ENCODE measurements at regions of chr6 and their contacts with region 1.

Region 1: GRCh38 chr6:87929843-87930288 is 117.8 kb upstream of the SPACA1 start:
- H3K4me3 Mint-ChIP-seq: no peak overlapping the region
- H3K27ac Mint-ChIP-seq: no peak overlapping the region
- H3K4me1 Mint-ChIP-seq: no peaks in the 10 kb centered on the region
- H3K27me3 Mint-ChIP-seq: no peaks in the 10 kb centered on the region

Region 2: DNA sequence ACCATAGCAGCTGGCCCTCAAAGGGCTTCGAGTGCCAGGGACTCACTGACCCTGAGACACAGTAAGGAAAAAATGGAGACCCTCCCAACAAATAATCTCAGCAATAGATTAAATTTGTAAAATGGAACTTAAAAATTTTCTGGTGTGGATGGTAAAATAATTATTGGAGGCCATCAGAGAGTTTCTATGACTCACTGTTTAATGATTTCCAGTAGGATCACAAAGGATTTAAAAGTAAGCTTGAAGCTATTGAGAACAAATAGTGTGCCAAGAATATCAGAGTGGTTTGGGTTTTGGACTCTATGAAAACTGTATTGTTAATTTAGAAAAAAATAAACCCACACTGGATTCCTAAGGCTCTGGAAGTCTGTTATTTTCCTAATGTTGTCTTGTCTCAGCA is 112.7 kb before region 1 on chr6:
- intact Hi-C with region 1: no loop called
- H3K4me3 Mint-ChIP-seq: no peak overlapping the region
- H3K27ac Mint-ChIP-seq: no peak overlapping the region
- H3K4me1 Mint-ChIP-seq: no peaks in the 10 kb centered on the region
- H3K27me3 Mint-ChIP-seq: no peaks in the 10 kb centered on the region

Region 3: DNA sequence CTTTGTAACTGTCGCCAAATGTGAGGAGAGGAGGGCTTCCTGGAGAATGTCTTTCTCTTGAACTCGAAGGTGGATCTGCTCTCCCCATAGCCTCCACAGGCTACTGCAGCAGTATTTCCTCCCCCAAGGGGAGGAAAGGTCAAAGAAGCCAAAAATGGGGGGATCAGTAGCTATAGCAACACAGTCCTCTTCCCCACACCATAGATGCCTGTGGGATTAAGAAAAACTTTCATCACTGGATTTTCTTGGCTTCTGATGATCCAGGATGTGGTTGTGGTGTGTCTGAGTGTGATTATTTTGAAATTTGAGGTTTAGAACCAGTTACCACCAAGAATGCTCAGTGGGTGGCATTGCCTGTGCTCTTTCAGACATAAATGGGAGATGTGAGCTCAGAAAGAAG is 22.3 kb before region 1 on chr6:
- intact Hi-C with region 1: no loop called
- H3K4me3 Mint-ChIP-seq: no peak overlapping the region
- H3K27ac Mint-ChIP-seq: no peak overlapping the region
- H3K4me1 Mint-ChIP-seq: peaks cover 7% of the 10 kb centered on the region
- H3K27me3 Mint-ChIP-seq: peaks cover 21% of the 10 kb centered on the region

Region 4: DNA sequence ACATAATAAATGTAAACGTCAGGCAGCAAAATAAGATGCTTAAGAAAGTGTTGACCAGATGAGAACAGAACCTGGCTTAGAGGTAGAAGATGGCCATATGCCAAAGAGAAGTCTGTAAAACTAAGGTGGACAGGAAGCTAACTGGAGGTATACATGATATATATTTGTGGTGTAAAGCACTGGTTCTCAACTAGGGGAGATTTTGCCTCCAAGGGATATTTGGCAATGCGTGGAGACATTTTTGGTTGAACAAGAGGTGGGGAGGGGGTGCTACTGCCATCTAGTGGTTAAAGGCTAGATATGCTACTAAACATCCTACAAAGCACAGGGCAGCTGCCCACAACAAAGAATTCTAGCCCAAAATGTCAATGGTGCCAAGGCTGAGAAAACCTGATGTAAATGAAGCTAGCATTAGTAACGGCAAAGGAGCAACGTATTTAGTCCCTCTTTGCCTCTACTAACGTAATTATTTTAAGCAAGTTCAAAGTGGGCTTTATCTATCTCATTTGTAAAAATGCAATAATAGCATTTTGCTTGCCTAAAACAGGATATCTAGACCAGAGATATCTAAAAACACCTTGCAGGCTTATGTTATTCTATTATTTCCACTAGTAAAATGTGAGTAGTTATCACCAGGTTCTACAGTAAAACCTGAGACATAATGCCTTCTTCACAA is 851.0 kb after region 1 on chr6:
- intact Hi-C with region 1: loop called (anchors 5 kb)
- H3K4me3 Mint-ChIP-seq: no peak overlapping the region
- H3K27ac Mint-ChIP-seq: no peak overlapping the region
- H3K4me1 Mint-ChIP-seq: peaks cover 6% of the 10 kb centered on the region
- H3K27me3 Mint-ChIP-seq: no peaks in the 10 kb centered on the region

Region 5: GRCh38 chr6:88870717-88871330 is 941.0 kb after region 1 on chr6:
- intact Hi-C with region 1: loop called (anchors 1 kb)
- H3K4me3 Mint-ChIP-seq: no peak overlapping the region
- H3K27ac Mint-ChIP-seq: no peak overlapping the region
- H3K4me1 Mint-ChIP-seq: no peaks in the 10 kb centered on the region
- H3K27me3 Mint-ChIP-seq: no peaks in the 10 kb centered on the region

Measured in dendritic cell treated with granulocyte-macrophage colony-stimulating factor and Interleukin-4, amounts not matched to agents 40 ng/mL and 50 ng/mL, for 4 days (primary cell).